Right ventricle myocardium inferior (tissue), 1 donor: ENCODE measurements at regions of chr12 and their contacts with region 1.

Region 1: GRCh38 chr12:27652174-27652763 is 44.0 kb upstream of the REP15 start:
- DNase-seq: no peak
- ATAC-seq: peak; percentile 80

Region 2: DNA sequence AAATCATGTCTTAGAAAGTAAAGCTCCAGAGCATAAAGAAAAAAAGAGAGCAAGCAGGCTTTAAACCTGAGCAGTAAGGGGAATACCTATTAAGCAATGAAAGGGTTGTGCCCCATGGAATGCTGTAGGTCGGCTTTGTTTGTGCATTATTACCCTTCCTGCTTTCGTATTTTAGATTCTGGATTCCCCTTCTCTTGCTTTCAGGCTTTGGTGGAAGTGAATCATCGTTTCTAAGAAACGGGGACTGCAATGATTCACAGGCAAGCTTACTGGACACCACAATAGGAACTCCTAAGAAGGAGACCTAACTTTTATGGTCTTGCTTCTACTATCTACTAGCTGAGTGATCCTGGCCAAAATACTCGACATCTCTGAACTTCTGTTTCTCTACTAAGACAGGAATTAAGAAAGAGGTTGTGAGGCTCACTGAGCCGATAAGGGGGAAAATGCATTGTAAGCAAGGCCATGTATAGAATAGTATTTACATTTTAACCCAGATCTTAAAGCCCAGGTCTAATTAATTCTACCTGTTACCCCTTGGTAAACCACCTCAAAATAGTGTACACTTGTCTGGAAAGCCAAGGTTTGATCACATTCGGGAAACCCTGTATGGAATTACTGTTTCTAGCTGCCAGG is 320.9 kb before region 1 on chr12:
- intact Hi-C with region 1: loop called (anchors 2 kb)
- DNase-seq: no peak
- ATAC-seq: no peak

Region 3: DNA sequence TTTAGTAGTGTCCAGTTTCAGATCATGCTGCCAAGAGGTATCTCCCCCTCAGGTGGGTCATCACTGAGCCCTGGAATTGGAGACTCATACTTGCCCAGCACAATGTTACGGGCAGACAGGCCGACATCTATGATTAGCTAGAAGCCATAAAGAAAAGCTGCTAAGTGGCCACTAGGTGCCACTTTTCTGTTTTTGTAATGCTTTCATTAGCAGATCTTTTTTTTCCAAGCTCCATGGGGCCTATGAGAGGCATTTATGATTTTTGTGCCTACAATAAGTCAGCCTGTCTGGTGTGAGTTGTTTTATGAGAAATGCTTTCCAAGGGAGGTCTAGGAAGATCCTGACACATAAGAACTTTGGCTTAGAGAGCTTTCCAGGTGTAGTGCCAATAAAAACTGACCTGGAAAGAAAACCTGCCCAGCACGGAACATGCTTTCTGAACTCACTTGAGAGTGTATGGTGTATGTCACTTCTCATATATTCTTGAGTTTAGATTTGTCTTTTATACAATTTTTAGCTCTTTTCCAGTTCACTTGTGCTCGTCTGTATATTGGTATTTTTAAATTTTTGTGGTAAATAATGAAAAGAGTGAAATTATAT is 227.5 kb before region 1 on chr12:
- intact Hi-C with region 1: loop called (anchors 2 kb)
- DNase-seq: no peak
- ATAC-seq: peak; percentile 81

Region 4: DNA sequence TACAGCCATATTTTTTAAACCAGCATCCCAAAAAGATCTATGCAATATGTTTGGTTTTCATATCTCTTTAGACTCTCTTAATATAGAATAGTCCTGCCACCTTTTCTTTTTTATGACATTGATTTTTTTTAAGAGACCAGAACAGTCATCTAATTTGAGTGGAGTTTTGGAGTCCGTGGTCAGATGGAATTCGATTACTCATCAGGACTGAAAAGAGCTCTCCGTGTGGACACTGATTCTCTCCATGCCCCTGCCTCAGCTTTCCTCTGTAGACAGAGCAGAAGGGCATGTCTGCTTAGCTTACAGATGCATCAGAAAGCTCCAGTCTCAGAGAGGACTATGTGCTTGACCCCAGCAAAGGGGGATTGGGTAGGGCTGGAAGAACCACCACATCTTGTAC is 177.9 kb before region 1 on chr12:
- intact Hi-C with region 1: no loop called
- DNase-seq: no peak
- ATAC-seq: no peak

Region 5: GRCh38 chr12:27723212-27723611 is 70.9 kb after region 1 on chr12:
- intact Hi-C with region 1: no loop called
- DNase-seq: no peak
- ATAC-seq: no peak

Region 6: DNA sequence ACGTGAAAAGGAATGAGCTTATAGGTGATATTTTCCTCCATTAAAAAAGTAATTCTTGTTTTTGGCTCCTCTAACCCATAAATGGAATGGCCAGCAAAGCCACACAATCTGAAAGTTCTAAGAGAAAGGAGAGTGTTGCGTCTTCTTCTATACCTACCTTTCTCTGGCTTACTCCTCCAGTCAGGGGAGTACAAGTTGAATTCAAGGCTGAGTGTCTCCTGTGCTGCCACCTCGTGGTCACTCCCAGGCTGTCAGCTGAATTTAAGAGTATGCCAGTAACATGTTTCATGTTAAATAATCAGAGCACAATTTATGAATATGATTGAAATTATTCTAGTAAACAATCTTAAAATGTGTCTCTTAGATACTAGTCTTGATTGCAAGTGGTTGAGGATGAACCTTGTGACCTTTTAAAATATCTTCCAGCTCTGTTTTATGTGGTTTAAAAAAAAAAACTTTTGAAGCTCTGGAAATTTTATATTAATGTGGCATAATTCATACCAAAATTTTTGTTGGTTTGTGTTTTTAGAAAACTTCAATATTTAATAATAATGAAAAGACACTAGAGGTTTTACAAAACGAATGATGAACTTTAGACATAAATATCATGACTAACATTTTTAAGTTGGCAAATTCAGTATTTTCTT is 288.6 kb after region 1 on chr12:
- intact Hi-C with region 1: no loop called
- DNase-seq: peak; percentile 79
- ATAC-seq: no peak

Region 7: GRCh38 chr12:27960821-27961220 is 308.6 kb after region 1 on chr12:
- intact Hi-C with region 1: no loop called
- DNase-seq: no peak
- ATAC-seq: no peak